HEK293 (cell line): ENCODE measurements at regions of chr7 and their contacts with region 1.

Region 1: GRCh38 chr7:1175967-1176851 is 16.2 kb upstream of the ZFAND2A start:
- H3K4me3 ChIP-seq: peak overlapping the region; percentile 35
- H3K27ac ChIP-seq: no peak overlapping the region
- H3K4me1 ChIP-seq: no peaks in the 10 kb centered on the region
- CTCF ChIP-seq: peak; percentile 82

Region 2: GRCh38 chr7:1086588-1087464 is 89.4 kb before region 1 on chr7:
- CTCF ChIA-PET with region 1: interaction called, 38 read pairs
- POLR2A ChIA-PET with region 1: no interaction called
- H3K4me3 ChIP-seq: no peak overlapping the region; the same call in 1 of the 2 replicates
- H3K27ac ChIP-seq: peak overlapping the region; percentile 43; the same call in 1 of the 2 replicates
- H3K4me1 ChIP-seq: peaks cover 21% of the 10 kb centered on the region
- CTCF ChIP-seq: peak; percentile 81

Region 3: GRCh38 chr7:1137510-1138167 is 38.6 kb before region 1 on chr7:
- CTCF ChIA-PET with region 1: interaction called, 16 read pairs
- POLR2A ChIA-PET with region 1: interaction called, 3 read pairs
- H3K4me3 ChIP-seq: peak overlapping the region; percentile 74
- H3K27ac ChIP-seq: peak overlapping the region; percentile 13; the same call in 1 of the 2 replicates
- H3K4me1 ChIP-seq: no peaks in the 10 kb centered on the region; the same call in 1 of the 2 replicates
- CTCF ChIP-seq: no peak

Region 4: GRCh38 chr7:1159891-1160668 is 16.1 kb before region 1 on chr7 and contains the start of gene ZFAND2A:
- CTCF ChIA-PET with region 1: interaction called, 18 read pairs
- POLR2A ChIA-PET with region 1: interaction called, 3 read pairs
- H3K4me3 ChIP-seq: peak within 1 kb of the TSS; percentile 96
- H3K27ac ChIP-seq: peak within 1 kb of the TSS; percentile 94
- H3K4me1 ChIP-seq: 0 out of 2 replicates have a peak, but pooled peaks cover 2% of the 10 kb centered on the region
- CTCF ChIP-seq: no peak

Region 5: GRCh38 chr7:1187127-1187526 is 10.9 kb after region 1 on chr7:
- CTCF ChIA-PET with region 1: interaction called, 34 read pairs
- POLR2A ChIA-PET with region 1: no interaction called
- H3K4me3 ChIP-seq: no peak overlapping the region
- H3K27ac ChIP-seq: no peak overlapping the region
- H3K4me1 ChIP-seq: no peaks in the 10 kb centered on the region
- CTCF ChIP-seq: no peak

Region 6: DNA sequence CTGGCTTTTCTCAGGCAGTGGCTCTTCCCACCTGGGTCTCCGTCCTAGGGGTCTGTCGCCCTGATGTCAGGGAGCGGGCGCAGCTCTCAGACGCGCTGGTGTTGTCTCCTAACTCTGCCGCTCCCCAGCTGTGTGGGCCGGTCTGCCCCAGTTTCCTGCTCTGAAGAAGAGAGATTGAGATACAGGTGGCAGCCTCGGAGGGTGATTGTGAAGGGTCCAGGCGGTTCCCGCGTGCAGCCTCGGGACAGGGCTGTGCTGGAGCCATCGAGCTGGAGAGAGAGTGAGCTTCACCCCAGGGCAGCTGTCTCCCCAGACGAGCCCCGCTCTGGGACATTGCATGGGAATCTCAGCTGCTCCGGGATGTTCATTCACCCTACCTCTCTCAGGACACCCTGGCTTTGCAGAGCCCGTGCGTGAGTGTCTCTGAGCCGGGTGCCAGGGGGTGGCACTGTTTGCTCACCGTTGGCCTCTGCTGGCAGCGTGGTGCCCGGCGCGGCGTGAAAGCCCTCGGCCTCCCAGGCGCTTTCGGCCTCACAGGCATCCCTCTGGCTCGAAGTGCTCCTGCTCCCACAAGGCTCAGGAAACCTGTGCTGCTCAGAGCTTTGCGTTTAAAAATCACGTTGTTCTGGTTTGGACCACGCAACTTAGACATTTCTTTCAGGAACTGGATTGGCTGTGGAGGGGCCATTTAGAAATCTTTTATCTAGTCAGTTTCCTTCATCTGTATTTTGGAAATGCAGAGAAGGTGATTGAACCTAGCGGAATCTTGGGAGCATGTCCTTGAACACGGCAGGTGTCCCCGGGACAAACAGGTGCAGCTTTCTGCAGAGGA is 17.6 kb after region 1 on chr7:
- CTCF ChIA-PET with region 1: interaction called, 34 read pairs
- POLR2A ChIA-PET with region 1: interaction called, 5 read pairs
- H3K4me3 ChIP-seq: no peak overlapping the region
- H3K27ac ChIP-seq: no peak overlapping the region
- H3K4me1 ChIP-seq: no peaks in the 10 kb centered on the region
- CTCF ChIP-seq: peak; percentile 87

Region 7: GRCh38 chr7:1407892-1408291 is 231.7 kb after region 1 on chr7:
- CTCF ChIA-PET with region 1: interaction called, 11 read pairs
- POLR2A ChIA-PET with region 1: no interaction called
- H3K4me3 ChIP-seq: no peak overlapping the region
- H3K27ac ChIP-seq: no peak overlapping the region
- H3K4me1 ChIP-seq: peaks cover 6% of the 10 kb centered on the region
- CTCF ChIP-seq: no peak